Natural killer cell (primary cell): ENCODE measurements at regions of chr2 and their contacts with region 1.

Region 1: GRCh38 chr2:64018923-64019718 is at the start of gene VPS54:
- DNase-seq: peak; percentile 58 to 76
- ATAC-seq: peak; percentile 79 to 87 (median 87)
- H3K4me3 ChIP-seq: peak within 1 kb of the TSS; percentile 80
- H3K4me3 Mint-ChIP-seq: peak within 1 kb of the TSS; percentile 100
- H3K27ac ChIP-seq: peak within 1 kb of the TSS; percentile 63
- H3K27ac Mint-ChIP-seq: peak within 1 kb of the TSS; percentile 92 to 95
- H3K4me1 ChIP-seq: peaks cover 6% of the 10 kb centered on the region
- H3K4me1 Mint-ChIP-seq: peaks cover 28 to 30% of the 10 kb centered on the region in 2 donors
- H3K27me3 ChIP-seq: no peaks in the 10 kb centered on the region
- H3K27me3 Mint-ChIP-seq: no peaks in the 10 kb centered on the region
- CTCF ChIP-seq: no peak
- total RNA-seq, gene VPS54: 12.1 to 17.3 (median 13.5) TPM

Region 2: GRCh38 chr2:63841254-63842022 is 177.7 kb before region 1 on chr2 and contains the start of gene UGP2:
- intact Hi-C with region 1: loop called (anchors 5 kb)
- DNase-seq: peak; percentile 85 to 89
- ATAC-seq: peak; percentile 74 to 85 (median 74)
- H3K4me3 ChIP-seq: peak within 1 kb of the TSS; percentile 77
- H3K4me3 Mint-ChIP-seq: peak within 1 kb of the TSS; percentile 97
- H3K27ac ChIP-seq: peak within 1 kb of the TSS; percentile 89
- H3K27ac Mint-ChIP-seq: peak within 1 kb of the TSS; percentile 90 to 97
- H3K4me1 ChIP-seq: peaks cover 12% of the 10 kb centered on the region
- H3K4me1 Mint-ChIP-seq: peaks cover 45 to 59% of the 10 kb centered on the region in 2 donors
- H3K27me3 ChIP-seq: no peaks in the 10 kb centered on the region
- H3K27me3 Mint-ChIP-seq: no peaks in the 10 kb centered on the region
- CTCF ChIP-seq: no peak
- total RNA-seq, gene UGP2: 100 to 117 (median 101) TPM

Region 3: DNA sequence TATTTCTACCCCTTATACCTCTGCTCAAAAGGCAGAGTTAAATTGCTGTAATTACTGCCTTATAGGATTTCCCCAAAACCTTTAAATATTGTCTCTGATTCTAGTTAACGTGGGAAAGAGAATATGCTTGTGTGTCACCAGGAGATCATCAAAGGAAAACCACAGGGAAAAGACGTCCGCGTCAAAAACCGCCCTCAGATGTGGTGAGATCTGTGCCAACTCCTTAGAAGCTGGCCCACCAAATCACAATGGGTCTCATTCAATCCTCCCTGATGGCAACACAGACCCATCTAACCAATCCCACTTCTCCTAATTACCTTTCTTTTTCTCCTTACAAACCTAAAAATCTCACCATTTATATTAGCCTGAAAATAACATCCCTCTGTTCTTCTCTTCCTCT is 25.2 kb before region 1 on chr2:
- intact Hi-C with region 1: no loop called
- DNase-seq: peak in 1 of 2 donors; percentile 36
- ATAC-seq: no peak
- H3K4me3 ChIP-seq: no peak overlapping the region
- H3K4me3 Mint-ChIP-seq: no peak overlapping the region
- H3K27ac ChIP-seq: no peak overlapping the region
- H3K27ac Mint-ChIP-seq: no peak overlapping the region
- H3K4me1 ChIP-seq: no peaks in the 10 kb centered on the region
- H3K4me1 Mint-ChIP-seq: peaks cover 15 to 18% of the 10 kb centered on the region in 2 donors
- H3K27me3 ChIP-seq: no peaks in the 10 kb centered on the region
- H3K27me3 Mint-ChIP-seq: no peaks in the 10 kb centered on the region
- CTCF ChIP-seq: no peak

Region 4: GRCh38 chr2:64036034-64036705 is 17.0 kb after region 1 on chr2:
- intact Hi-C with region 1: loop called (anchors 2 kb)
- DNase-seq: peak in 1 of 2 donors; percentile 76
- ATAC-seq: peak; percentile 95 to 99 (median 96)
- H3K4me3 ChIP-seq: no peak overlapping the region
- H3K4me3 Mint-ChIP-seq: no peak overlapping the region
- H3K27ac ChIP-seq: no peak overlapping the region
- H3K27ac Mint-ChIP-seq: peak overlapping the region in 1 of 2 donors; percentile 66
- H3K4me1 ChIP-seq: peaks cover 4% of the 10 kb centered on the region
- H3K4me1 Mint-ChIP-seq: peaks cover 19 to 20% of the 10 kb centered on the region in 2 donors
- H3K27me3 ChIP-seq: no peaks in the 10 kb centered on the region
- H3K27me3 Mint-ChIP-seq: no peaks in the 10 kb centered on the region
- CTCF ChIP-seq: no peak

Region 5: DNA sequence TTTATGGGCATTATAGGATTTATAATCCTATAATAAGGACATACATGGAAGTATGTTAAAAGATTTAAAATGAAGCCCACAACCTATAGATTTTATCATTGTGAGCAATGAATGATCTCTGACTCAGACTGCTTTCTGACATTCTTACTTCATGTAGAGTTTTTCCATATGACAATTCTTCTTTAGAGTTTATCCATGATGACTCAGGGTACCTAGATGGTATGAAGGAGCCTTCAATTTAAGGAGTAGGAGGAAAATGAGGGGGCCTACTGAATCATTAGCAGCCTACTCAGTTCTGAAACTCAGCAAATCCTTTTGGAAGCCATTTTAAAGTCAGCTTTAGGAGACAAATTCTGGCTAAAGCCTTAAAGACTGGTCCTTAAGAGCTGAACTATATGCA is 114.7 kb after region 1 on chr2:
- intact Hi-C with region 1: no loop called
- DNase-seq: no peak
- ATAC-seq: no peak
- H3K4me3 ChIP-seq: no peak overlapping the region
- H3K4me3 Mint-ChIP-seq: no peak overlapping the region
- H3K27ac ChIP-seq: no peak overlapping the region
- H3K27ac Mint-ChIP-seq: no peak overlapping the region
- H3K4me1 ChIP-seq: no peaks in the 10 kb centered on the region
- H3K4me1 Mint-ChIP-seq: peaks cover 17 to 19% of the 10 kb centered on the region in 2 donors
- H3K27me3 ChIP-seq: no peaks in the 10 kb centered on the region
- H3K27me3 Mint-ChIP-seq: no peaks in the 10 kb centered on the region
- CTCF ChIP-seq: no peak

Region 6: DNA sequence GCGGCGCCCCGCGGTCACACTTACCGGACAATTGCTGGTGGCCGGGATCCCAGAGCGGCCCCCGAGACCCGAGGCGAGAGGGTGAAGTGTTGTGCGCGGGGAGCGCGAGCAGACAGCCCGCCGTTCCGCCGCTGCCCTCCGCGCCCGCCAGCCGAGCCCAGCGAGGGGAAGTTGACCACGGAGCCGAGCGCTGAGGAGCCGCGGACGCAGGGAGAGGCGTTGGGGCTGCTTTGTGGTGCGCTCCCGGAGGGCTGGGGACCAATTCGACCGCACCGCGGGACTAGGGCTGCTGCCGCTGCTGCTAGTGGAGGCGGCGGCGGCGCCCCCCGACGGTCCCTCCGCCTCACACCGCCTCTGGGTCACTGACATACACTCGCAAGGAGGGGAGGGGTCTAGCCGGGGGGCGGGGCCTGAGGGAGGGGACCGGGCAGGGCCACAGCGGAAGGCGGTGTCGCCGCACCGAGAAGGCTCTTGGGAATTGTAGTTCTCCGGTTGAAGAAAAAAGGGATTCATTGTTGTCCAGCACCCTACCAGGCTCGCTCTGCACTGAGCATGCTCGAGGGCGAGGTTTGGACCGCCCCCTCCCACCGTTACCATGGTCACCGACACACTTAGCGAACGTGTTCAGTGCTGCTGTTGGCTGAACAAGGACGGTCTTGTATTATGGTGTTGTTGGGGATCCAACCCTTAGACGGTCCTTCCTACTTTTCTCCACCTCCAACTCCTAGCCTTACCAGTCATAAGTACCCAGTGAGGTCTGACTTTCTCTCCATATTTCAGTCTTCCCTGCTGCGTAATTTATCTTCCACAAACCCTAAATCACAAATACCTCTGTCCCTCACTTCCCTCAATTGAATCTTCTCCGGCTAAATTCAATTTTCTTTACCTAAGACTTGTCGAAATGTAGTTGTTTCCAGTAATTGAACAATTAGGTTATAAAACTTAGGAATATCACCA is 125.2 kb after region 1 on chr2 and contains the start of gene PELI1:
- intact Hi-C with region 1: loop called (anchors 5 kb)
- DNase-seq: peak; percentile 81 to 95
- ATAC-seq: peak; percentile 96 to 99 (median 97)
- H3K4me3 ChIP-seq: peak within 1 kb of the TSS; percentile 77
- H3K4me3 Mint-ChIP-seq: peak within 1 kb of the TSS; percentile 97
- H3K27ac ChIP-seq: peak within 1 kb of the TSS; percentile 85
- H3K27ac Mint-ChIP-seq: peak within 1 kb of the TSS; percentile 89 to 95
- H3K4me1 ChIP-seq: peaks cover 3% of the 10 kb centered on the region
- H3K4me1 Mint-ChIP-seq: peaks cover 21 to 31% of the 10 kb centered on the region in 2 donors
- H3K27me3 ChIP-seq: no peaks in the 10 kb centered on the region
- H3K27me3 Mint-ChIP-seq: no peaks in the 10 kb centered on the region
- CTCF ChIP-seq: peak; percentile 36
- total RNA-seq, gene PELI1: 42.3 to 141 (median 65.0) TPM